CD4-positive, alpha-beta memory T cell (primary cell): ENCODE measurements at regions of chr10 and their contacts with region 1.

Region 1: GRCh38 chr10:32295027-32295426 is 51.9 kb downstream of the EPC1 start:
- DNase-seq: no peak
- H3K4me3 ChIP-seq: no peak overlapping the region
- H3K4me3 Mint-ChIP-seq: no peak overlapping the region
- H3K27ac ChIP-seq: peak overlapping the region; percentile 19
- H3K27ac Mint-ChIP-seq: peak overlapping the region in 5 of 7 donors; percentile 33 to 80 (median 62)
- H3K4me1 ChIP-seq: peaks cover 50% of the 10 kb centered on the region
- H3K4me1 Mint-ChIP-seq: peaks cover 34 to 61% (median 42%) of the 10 kb centered on the region in 4 donors
- H3K27me3 ChIP-seq: no peaks in the 10 kb centered on the region
- H3K27me3 Mint-ChIP-seq: no peaks in the 10 kb centered on the region

Region 2: DNA sequence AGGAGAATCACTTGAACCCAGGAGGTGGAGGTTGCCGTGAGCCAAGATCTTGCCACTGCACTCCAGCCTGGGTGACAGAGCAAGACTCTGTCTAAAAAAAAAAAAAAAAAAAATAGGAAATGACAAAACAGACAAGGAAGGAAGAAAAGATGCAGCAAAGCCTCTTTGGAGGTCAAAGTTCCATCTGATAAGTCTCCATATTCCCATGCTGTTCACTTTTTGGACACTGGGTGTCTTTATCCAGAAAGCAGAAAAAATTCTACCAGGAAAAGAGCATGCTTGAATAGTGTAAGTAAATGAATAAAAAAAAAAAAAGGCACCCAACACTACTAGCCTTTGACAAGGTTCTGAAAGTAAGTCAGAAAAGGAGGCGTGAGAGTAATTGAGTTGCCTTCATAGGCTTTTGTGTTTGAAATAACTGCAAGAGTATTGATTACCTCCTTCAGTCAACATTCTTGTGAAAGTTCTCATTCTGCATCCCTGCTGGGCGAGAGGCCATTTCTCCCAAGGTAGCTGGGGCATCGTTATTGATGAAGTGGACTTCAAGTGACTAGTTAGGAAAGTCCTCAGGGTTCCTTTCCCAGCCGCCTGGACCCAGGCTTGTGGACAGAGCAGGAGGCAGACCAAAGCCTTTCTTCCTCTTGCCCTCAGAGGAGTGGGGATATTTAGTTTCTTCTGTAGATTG is 105.5 kb before region 1 on chr10:
- CTCF ChIA-PET with region 1: no interaction called
- POLR2A ChIA-PET with region 1: no interaction called
- intact Hi-C with region 1: no loop called
- DNase-seq: no peak
- H3K4me3 ChIP-seq: no peak overlapping the region
- H3K4me3 Mint-ChIP-seq: no peak overlapping the region
- H3K27ac ChIP-seq: no peak overlapping the region
- H3K27ac Mint-ChIP-seq: no peak overlapping the region
- H3K4me1 ChIP-seq: no peaks in the 10 kb centered on the region
- H3K4me1 Mint-ChIP-seq: peaks cover 0 to 6% (median 3%) of the 10 kb centered on the region in 4 donors
- H3K27me3 ChIP-seq: no peaks in the 10 kb centered on the region
- H3K27me3 Mint-ChIP-seq: no peaks in the 10 kb centered on the region

Region 3: GRCh38 chr10:32271617-32272016 is 23.4 kb before region 1 on chr10:
- CTCF ChIA-PET with region 1: interaction called, 3 read pairs
- POLR2A ChIA-PET with region 1: no interaction called
- intact Hi-C with region 1: loop called (anchors 2 kb)
- DNase-seq: no peak
- H3K4me3 ChIP-seq: no peak overlapping the region
- H3K4me3 Mint-ChIP-seq: no peak overlapping the region
- H3K27ac ChIP-seq: no peak overlapping the region
- H3K27ac Mint-ChIP-seq: peak overlapping the region in 2 of 7 donors; percentile 70 to 84
- H3K4me1 ChIP-seq: no peaks in the 10 kb centered on the region
- H3K4me1 Mint-ChIP-seq: peaks cover 2 to 12% (median 8%) of the 10 kb centered on the region in 4 donors
- H3K27me3 ChIP-seq: no peaks in the 10 kb centered on the region
- H3K27me3 Mint-ChIP-seq: no peaks in the 10 kb centered on the region